OCI-LY7 (cell line): ENCODE measurements at regions of chr1 and their contacts with region 1.

Region 1: DNA sequence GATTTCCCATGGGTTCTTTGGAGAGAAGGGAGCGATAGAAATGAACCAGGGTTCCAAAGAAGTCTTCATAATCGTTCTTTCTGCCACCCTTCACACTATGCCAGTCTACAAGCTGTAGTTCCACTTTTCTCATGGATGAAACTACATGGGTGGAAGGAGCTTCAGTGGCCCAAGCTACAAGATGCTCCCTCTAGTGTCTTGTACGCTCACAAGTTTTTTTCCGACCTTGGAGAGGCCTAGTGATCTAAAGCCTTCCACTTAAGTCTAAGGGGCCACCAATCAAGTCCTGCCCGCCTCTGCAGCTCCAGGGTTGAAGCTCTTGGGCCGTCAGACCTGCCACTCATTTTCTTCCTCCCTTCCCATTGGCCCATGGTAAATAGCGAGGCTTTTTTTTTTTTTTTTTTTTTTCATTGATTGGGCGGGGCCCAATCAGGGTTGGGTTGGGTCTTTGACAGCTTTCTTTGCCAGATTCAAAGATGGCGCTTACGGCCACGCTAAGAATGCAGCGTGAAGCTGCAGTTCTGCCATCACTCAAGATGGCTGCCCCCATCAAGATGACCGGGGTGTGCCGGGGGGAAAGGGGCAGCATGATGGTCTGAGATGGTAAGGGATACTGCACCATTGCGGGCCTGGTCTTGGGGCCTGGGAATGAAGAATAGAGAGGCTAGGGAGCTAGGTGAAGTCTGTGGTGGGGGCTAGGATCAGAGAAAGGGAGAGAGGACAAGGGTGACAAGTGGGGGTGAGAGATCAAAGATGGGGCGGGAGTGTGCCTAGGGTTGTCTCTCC is at the start of gene TOMM40L:
- DNase-seq: peak; percentile 99
- H3K4me3 ChIP-seq: peak within 1 kb of the TSS; percentile 73
- H3K27ac ChIP-seq: peak within 1 kb of the TSS; percentile 35
- H3K4me1 ChIP-seq: peaks cover 24% of the 10 kb centered on the region
- CTCF ChIP-seq: peak; percentile 87
- total RNA-seq, gene TOMM40L: 8.3 and 11.0 TPM in 2 replicates

Region 2: GRCh38 chr1:160862203-160863060 is 363.3 kb before region 1 on chr1 and contains the start of gene CD244:
- CTCF ChIA-PET with region 1: no interaction called
- POLR2A ChIA-PET with region 1: no interaction called
- intact Hi-C with region 1: no loop called
- DNase-seq: no peak
- H3K4me3 ChIP-seq: no peak within 1 kb of the TSS
- H3K27ac ChIP-seq: no peak within 1 kb of the TSS
- H3K4me1 ChIP-seq: no peaks in the 10 kb centered on the region
- CTCF ChIP-seq: no peak
- total RNA-seq, gene CD244: not detected in 2 replicates

Region 3: DNA sequence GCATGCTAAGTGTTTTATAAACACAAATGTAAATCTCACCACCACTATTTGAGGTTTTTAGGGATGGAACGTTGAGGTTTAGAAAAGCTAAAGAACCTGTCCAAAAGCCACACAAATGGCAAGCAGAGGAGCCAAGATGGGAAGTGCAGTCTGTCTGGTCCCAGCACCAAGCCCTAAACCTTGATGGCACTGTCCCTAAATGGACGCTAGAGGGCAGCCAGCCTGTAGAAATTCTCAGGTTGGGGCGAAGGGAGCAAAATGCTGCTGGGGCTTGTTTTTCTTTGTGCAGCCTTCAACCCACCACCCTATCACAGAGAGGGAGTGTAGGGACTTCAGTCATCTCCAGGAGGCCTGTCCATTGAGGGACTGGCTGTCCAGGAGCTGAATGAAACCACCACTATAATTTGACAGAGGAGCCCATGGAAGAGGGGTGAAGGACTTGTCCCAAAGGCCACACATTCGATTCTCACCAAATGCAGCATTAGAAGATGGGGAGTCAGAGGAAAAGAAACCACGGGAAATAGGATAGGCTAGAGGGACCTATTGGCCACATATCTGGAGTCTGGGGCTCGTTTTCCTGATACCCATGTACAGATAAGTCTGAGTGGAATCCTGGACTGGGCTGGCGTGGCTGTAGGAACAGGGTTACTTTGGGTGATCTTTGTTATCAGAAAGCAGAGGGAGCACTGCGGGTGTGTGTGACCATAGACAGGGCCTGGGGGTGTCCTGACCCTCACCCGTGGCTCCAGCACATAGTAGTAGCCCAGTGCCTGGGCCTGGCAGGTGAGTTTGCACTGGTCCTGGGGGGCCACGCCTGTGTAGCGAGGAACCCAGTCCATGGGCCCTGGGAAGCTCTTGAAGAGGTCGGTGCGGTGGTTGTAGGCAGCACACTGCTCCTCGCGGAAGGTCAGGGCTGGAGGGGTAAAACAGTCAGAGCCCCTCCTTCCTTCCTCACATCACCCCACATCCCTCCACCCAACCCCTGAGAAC is 33.0 kb before region 1 on chr1:
- CTCF ChIA-PET with region 1: interaction called, 10 read pairs
- POLR2A ChIA-PET with region 1: interaction called, 4 read pairs
- intact Hi-C with region 1: loop called (anchors 1 kb)
- DNase-seq: peak; percentile 86
- H3K4me3 ChIP-seq: no peak overlapping the region
- H3K27ac ChIP-seq: no peak overlapping the region
- H3K4me1 ChIP-seq: peaks cover 28% of the 10 kb centered on the region
- CTCF ChIP-seq: peak; percentile 96

Region 4: DNA sequence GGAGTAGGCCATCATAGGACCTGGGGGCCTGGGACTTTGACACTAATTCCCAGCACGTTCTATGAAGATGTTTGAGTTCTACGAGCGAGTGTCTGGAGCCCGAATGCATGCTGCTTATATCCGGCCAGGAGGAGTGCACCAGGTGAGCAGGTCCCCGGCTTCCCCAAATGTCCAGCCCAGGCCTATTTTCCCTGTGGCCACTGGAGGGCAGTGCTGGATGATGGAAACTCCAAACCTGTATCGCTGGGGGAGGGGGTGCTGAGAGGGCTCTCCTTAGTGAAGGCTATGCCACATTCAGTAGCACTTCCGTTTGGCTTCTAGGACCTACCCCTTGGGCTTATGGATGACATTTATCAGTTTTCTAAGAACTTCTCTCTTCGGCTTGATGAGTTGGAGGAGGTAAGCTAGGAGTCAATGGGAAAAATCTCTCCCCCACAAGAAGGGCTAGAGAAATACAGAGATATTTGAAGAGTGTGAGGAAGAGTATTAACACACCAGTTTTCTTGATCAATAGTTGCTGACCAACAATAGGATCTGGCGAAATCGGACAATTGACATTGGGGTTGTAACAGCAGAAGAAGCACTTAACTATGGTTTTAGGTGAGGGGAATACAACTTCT is 15.8 kb before region 1 on chr1:
- CTCF ChIA-PET with region 1: interaction called, 8 read pairs
- POLR2A ChIA-PET with region 1: interaction called, 9 read pairs
- intact Hi-C with region 1: loop called (anchors 1 kb)
- DNase-seq: peak; percentile 85
- H3K4me3 ChIP-seq: no peak overlapping the region
- H3K27ac ChIP-seq: no peak overlapping the region
- H3K4me1 ChIP-seq: peaks cover 13% of the 10 kb centered on the region
- CTCF ChIP-seq: peak; percentile 96

Region 5: GRCh38 chr1:161305867-161306519 is 80.3 kb after region 1 on chr1:
- CTCF ChIA-PET with region 1: interaction called, 5 read pairs
- POLR2A ChIA-PET with region 1: interaction called, 12 read pairs
- intact Hi-C with region 1: loop called (anchors 2 kb)
- DNase-seq: peak; percentile 95
- H3K4me3 ChIP-seq: peak overlapping the region; percentile 76
- H3K27ac ChIP-seq: peak overlapping the region; percentile 47
- H3K4me1 ChIP-seq: peaks cover 28% of the 10 kb centered on the region
- CTCF ChIP-seq: peak; percentile 79